PC-9 (cell line): ENCODE measurements at regions of chr7 and their contacts with region 1.

Region 1: GRCh38 chr7:44307301-44307900 is 18.0 kb downstream of the CAMK2B start:
- DNase-seq: peak; percentile 61 to 74
- H3K4me3 ChIP-seq: no peak overlapping the region
- H3K27ac ChIP-seq: no peak overlapping the region
- H3K4me1 ChIP-seq: no peaks in the 10 kb centered on the region
- H3K27me3 ChIP-seq: no peaks in the 10 kb centered on the region
- CTCF ChIP-seq: peak; percentile 61

Region 2: GRCh38 chr7:45015313-45015712 is 707.9 kb after region 1 on chr7:
- CTCF ChIA-PET with region 1: interaction called, 27 read pairs
- POLR2A ChIA-PET with region 1: no interaction called
- intact Hi-C with region 1: no loop called
- DNase-seq: no peak
- H3K4me3 ChIP-seq: no peak overlapping the region
- H3K27ac ChIP-seq: no peak overlapping the region
- H3K4me1 ChIP-seq: no peaks in the 10 kb centered on the region
- H3K27me3 ChIP-seq: no peaks in the 10 kb centered on the region
- CTCF ChIP-seq: no peak